Activated CD4-positive, alpha-beta T cell treated with anti-CD3 and anti-CD28 coated beads for 36 hours (primary cell): ENCODE measurements at regions of chrX and their contacts with region 1.

Region 1: DNA sequence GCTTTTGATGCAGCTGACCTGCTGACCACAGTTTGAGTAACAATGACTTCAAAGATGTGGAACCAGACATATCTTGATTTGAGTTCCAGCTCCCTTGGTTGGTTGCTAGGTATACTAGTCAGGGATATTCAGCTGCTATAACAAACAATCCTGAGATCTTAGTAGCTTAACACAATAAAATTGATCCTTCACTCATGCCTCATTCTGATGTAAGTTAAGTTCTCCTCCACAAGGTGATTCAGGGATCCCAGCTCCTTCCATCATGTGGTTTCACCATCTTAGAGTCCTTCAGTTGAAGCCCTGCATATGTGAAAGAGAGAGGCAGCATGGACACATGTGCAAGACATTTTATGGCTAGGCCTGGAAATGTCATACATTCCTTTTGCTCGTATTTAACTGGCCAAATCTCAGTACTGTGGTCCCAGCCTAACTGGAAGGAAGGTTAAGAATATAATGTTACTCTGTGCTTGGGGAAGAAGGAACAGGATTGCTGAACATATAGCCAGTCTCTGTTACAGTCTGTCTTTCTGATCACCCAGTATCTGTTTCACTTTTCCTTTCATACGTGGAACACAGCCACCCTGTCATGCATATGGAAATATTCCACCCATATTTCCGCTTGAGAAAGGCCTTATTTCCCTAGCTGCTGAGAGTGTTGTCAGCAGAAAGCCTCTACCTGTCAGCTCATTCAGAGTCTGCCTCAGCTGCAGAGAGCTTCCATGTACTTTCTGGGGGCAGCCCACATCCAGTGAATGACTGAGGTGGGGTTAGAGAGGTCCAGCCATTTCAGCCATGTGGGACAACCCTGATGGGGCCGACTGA is 7.1 kb downstream of the SMIM9 start:
- DNase-seq: no peak
- ATAC-seq: peak; percentile 83
- H3K4me3 Mint-ChIP-seq: no peak overlapping the region
- H3K27ac Mint-ChIP-seq: no peak overlapping the region
- H3K4me1 Mint-ChIP-seq: peaks cover 14% of the 10 kb centered on the region
- H3K27me3 Mint-ChIP-seq: no peaks in the 10 kb centered on the region

Region 2: GRCh38 chrX:154784149-154784995 is 43.0 kb before region 1 on chrX:
- CTCF ChIA-PET with region 1: no interaction called
- POLR2A ChIA-PET with region 1: no interaction called
- intact Hi-C with region 1: loop called in 1 of 2 experiments (anchors 5 kb)
- DNase-seq: no peak
- ATAC-seq: no peak
- H3K4me3 Mint-ChIP-seq: peak overlapping the region; percentile 34
- H3K27ac Mint-ChIP-seq: peak overlapping the region; percentile 59
- H3K4me1 Mint-ChIP-seq: peaks cover 17% of the 10 kb centered on the region
- H3K27me3 Mint-ChIP-seq: no peaks in the 10 kb centered on the region